GM12878 (cell line): ENCODE measurements at regions of chr2 and their contacts with region 1.

Region 1: DNA sequence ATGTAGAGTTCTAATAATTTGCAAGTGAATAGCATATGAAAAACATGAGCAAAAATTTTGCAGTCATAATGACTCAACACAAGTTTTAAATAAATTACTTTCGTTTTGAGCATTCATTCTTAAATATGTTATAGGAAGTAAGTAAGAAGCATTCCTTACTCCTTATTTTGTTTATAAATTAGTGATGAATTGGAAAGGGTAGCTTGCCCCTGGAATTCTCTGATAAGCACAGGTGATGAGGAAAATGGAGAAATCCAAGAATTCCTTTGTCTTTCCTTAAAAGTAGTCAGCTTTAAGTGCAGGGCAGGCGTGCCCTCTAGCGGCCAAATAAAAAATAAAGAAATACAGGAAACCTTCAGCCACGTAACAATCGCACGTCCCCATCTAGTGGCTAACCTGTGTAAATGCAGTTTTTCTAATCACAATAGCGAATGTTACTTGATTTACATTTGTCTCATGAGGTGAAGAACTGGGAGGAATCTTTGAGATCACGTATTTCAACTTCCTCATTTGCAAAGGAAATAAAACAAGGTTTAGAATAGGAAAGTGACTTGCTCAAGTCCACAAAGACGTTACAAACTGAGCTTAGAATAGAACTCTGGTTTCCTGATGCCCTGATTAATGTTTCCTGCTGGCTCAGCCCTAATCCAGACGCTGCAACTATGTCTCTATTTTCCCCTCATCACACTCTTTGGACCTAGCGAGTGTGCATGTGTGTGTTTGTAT is 47.2 kb upstream of the ZNG1B start:
- DNase-seq: peak; percentile 71
- ATAC-seq: peak; percentile 96
- H3K4me3 ChIP-seq: 0 out of 2 replicates have a peak overlapping the region, but pooled peaks have one; percentile 30
- H3K27ac ChIP-seq: peak overlapping the region; percentile 61; the same call in 1 of the 2 replicates
- H3K4me1 ChIP-seq: peaks cover 3% of the 10 kb centered on the region
- H3K27me3 ChIP-seq: no peaks in the 10 kb centered on the region
- CTCF ChIP-seq: peak; percentile 75 to 97 (median 95)
- EP300 ChIP-seq: no peak
- POLR2A ChIP-seq: no peak
- RAD21 ChIP-seq: peak; percentile 91

Region 2: GRCh38 chr2:113080134-113080533 is 310.2 kb before region 1 on chr2:
- CTCF ChIA-PET with region 1: interaction called, 17 read pairs
- POLR2A ChIA-PET with region 1: no interaction called
- RAD21 ChIA-PET with region 1: interaction called, 5 read pairs
- SMC1A ChIA-PET with region 1: interaction called, 8 read pairs
- in situ Hi-C with region 1: no loop called
- intact Hi-C with region 1: no loop called
- DNase-seq: no peak
- ATAC-seq: peak; percentile 88
- H3K4me3 ChIP-seq: no peak overlapping the region
- H3K27ac ChIP-seq: no peak overlapping the region
- H3K4me1 ChIP-seq: no peaks in the 10 kb centered on the region
- H3K27me3 ChIP-seq: no peaks in the 10 kb centered on the region; a peak in 1 of 4 replicates
- CTCF ChIP-seq: peak; percentile 86 to 89 (median 87)
- EP300 ChIP-seq: no peak
- POLR2A ChIP-seq: no peak
- RAD21 ChIP-seq: peak; percentile 82

Region 3: DNA sequence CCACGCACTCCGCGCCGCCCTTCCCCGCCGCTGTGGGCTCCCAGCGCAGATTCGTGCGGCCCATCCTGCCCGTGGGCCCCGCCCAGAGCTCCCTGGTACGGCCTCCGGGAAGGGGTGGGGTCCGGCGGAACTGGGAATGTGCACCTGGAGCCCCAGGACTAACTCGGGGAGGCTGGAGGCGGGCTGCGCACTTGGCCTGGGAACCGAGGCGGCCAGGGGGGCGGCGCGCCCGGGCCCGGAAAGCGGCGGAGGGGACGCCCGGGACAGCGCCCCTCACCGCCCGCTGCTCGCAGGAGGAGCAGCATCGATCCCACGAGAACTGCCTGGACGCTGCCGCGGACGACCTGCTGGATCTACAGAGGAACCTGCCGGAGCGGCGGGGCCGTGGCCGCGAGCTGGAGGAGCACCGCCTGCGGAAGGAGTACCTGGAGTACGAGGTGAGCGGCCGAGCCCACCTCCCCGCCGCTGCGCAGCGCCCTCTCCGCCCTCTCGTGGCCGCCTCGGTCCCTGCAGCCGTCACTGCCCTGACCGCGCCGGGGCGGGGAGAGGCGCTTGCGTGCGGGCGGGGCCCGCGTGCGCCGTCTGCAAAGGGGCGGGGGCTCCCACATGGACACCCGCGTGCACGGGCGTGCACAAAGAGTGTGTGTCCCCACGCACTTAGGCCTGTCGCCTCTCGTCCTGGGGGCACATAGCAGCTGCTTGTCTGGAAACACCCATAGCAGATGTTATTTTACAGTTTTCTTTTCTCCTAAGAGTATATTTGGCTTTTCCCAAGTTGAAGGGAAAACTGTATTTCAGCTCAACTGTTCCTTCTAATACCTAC is 191.3 kb before region 1 on chr2:
- CTCF ChIA-PET with region 1: interaction called, 36 read pairs
- POLR2A ChIA-PET with region 1: interaction called, 3 read pairs
- RAD21 ChIA-PET with region 1: interaction called, 5 read pairs
- SMC1A ChIA-PET with region 1: interaction called, 7 read pairs
- in situ Hi-C with region 1: no loop called
- intact Hi-C with region 1: loop called (anchors 2 kb)
- DNase-seq: no peak
- ATAC-seq: peak; percentile 89
- H3K4me3 ChIP-seq: no peak overlapping the region
- H3K27ac ChIP-seq: no peak overlapping the region
- H3K4me1 ChIP-seq: no peaks in the 10 kb centered on the region
- H3K27me3 ChIP-seq: no peaks in the 10 kb centered on the region
- CTCF ChIP-seq: peak; percentile 54 to 80 (median 75)
- EP300 ChIP-seq: no peak
- POLR2A ChIP-seq: no peak
- RAD21 ChIP-seq: peak; percentile 40

Region 4: GRCh38 chr2:113248997-113249770 is 141.1 kb before region 1 on chr2:
- CTCF ChIA-PET with region 1: interaction called, 45 read pairs
- POLR2A ChIA-PET with region 1: interaction called, 3 read pairs
- RAD21 ChIA-PET with region 1: interaction called, 8 read pairs
- SMC1A ChIA-PET with region 1: interaction called, 15 read pairs
- in situ Hi-C with region 1: no loop called
- intact Hi-C with region 1: loop called (anchors 2 kb)
- DNase-seq: peak; percentile 23
- ATAC-seq: peak; percentile 95
- H3K4me3 ChIP-seq: no peak overlapping the region
- H3K27ac ChIP-seq: no peak overlapping the region
- H3K4me1 ChIP-seq: peaks cover 8% of the 10 kb centered on the region; the same call in 1 of the 2 replicates
- H3K27me3 ChIP-seq: no peaks in the 10 kb centered on the region
- CTCF ChIP-seq: peak; percentile 90 to 93 (median 92)
- EP300 ChIP-seq: no peak
- POLR2A ChIP-seq: no peak
- RAD21 ChIP-seq: peak; percentile 86

Region 5: GRCh38 chr2:113291191-113291590 is 99.1 kb before region 1 on chr2:
- CTCF ChIA-PET with region 1: interaction called, 22 read pairs
- POLR2A ChIA-PET with region 1: no interaction called
- RAD21 ChIA-PET with region 1: no interaction called
- SMC1A ChIA-PET with region 1: interaction called, 3 read pairs
- in situ Hi-C with region 1: no loop called
- intact Hi-C with region 1: loop called (anchors 2 kb)
- DNase-seq: no peak
- ATAC-seq: no peak
- H3K4me3 ChIP-seq: no peak overlapping the region
- H3K27ac ChIP-seq: no peak overlapping the region
- H3K4me1 ChIP-seq: no peaks in the 10 kb centered on the region
- H3K27me3 ChIP-seq: peaks cover 0 to 4% of the 10 kb centered on the region in 2 experiments; a peak in 2 of 4 replicates
- CTCF ChIP-seq: no peak
- EP300 ChIP-seq: no peak
- POLR2A ChIP-seq: no peak
- RAD21 ChIP-seq: no peak

Region 6: DNA sequence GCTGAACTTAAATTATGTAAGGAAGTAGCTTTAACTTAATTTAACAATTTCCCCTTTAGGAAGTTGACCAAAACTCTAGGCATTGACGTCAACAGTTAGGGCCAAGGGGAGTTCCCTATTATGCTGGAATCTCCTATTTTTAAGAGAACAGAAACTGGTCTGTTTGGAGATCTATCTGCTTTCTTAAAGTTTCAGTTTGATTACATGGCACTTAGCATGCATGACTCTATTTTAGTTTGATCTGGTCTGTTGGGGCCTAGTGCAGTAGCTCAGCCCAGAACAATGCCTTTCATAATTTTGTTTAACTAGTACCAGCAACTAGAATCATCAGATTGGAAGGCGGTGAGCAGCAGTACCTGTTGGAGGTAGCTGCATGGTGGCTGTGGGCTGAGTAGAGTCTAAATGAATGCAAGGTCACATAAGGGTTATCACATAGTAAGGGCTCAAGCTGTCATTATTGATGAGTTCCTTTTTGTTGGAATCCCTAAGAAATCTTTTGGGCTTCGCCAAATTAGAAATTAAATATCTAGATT is 13.3 kb before region 1 on chr2:
- CTCF ChIA-PET with region 1: interaction called, 29 read pairs
- POLR2A ChIA-PET with region 1: no interaction called
- RAD21 ChIA-PET with region 1: interaction called, 12 read pairs
- SMC1A ChIA-PET with region 1: interaction called, 9 read pairs
- in situ Hi-C with region 1: no loop called
- intact Hi-C with region 1: no loop called
- DNase-seq: peak; percentile 34
- ATAC-seq: peak; percentile 97
- H3K4me3 ChIP-seq: no peak overlapping the region
- H3K27ac ChIP-seq: peak overlapping the region; percentile 26; the same call in 1 of the 2 replicates
- H3K4me1 ChIP-seq: peaks cover 4% of the 10 kb centered on the region
- H3K27me3 ChIP-seq: no peaks in the 10 kb centered on the region
- CTCF ChIP-seq: no peak
- EP300 ChIP-seq: no peak
- POLR2A ChIP-seq: no peak
- RAD21 ChIP-seq: no peak

Region 7: GRCh38 chr2:113977660-113978523 is 587.6 kb after region 1 on chr2:
- CTCF ChIA-PET with region 1: no interaction called
- POLR2A ChIA-PET with region 1: no interaction called
- RAD21 ChIA-PET with region 1: no interaction called
- SMC1A ChIA-PET with region 1: no interaction called
- in situ Hi-C with region 1: no loop called
- intact Hi-C with region 1: no loop called
- DNase-seq: no peak
- ATAC-seq: peak; percentile 18
- H3K4me3 ChIP-seq: no peak overlapping the region
- H3K27ac ChIP-seq: no peak overlapping the region
- H3K4me1 ChIP-seq: no peaks in the 10 kb centered on the region
- H3K27me3 ChIP-seq: no peaks in the 10 kb centered on the region
- CTCF ChIP-seq: peak in 1 of 3 experiments; percentile 12; a peak in 1 of 6 replicates
- EP300 ChIP-seq: no peak
- POLR2A ChIP-seq: no peak; the same call in 1 of the 2 replicates
- RAD21 ChIP-seq: no peak

Region 8: DNA sequence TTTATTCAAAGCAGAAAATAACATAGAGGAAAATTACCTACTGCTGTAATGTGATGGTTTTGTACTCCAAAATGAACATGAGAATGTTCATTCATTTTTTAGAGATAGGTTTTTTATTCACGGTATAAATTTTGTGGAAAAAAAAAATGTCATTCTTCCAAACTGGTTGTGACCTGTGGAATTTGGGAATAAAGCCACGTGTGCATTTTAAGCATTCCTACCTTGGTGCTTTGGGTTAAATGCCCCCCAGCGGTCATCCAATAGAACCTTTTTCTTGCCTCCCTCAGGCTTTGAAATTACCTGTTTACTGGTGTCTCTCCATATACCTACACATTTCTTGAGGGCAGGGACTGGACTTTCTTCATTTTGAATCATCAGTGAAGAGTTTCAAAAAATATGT is 1792.9 kb after region 1 on chr2:
- CTCF ChIA-PET with region 1: no interaction called
- POLR2A ChIA-PET with region 1: no interaction called
- RAD21 ChIA-PET with region 1: no interaction called
- SMC1A ChIA-PET with region 1: no interaction called
- in situ Hi-C with region 1: no loop called
- intact Hi-C with region 1: no loop called
- DNase-seq: no peak
- ATAC-seq: no peak
- H3K4me3 ChIP-seq: no peak overlapping the region
- H3K27ac ChIP-seq: no peak overlapping the region
- H3K4me1 ChIP-seq: no peaks in the 10 kb centered on the region
- H3K27me3 ChIP-seq: no peaks in the 10 kb centered on the region
- CTCF ChIP-seq: no peak
- EP300 ChIP-seq: no peak
- POLR2A ChIP-seq: no peak
- RAD21 ChIP-seq: no peak